ENCODE measurements at regions of chr10 and their contacts with region 1.

Region 1: DNA sequence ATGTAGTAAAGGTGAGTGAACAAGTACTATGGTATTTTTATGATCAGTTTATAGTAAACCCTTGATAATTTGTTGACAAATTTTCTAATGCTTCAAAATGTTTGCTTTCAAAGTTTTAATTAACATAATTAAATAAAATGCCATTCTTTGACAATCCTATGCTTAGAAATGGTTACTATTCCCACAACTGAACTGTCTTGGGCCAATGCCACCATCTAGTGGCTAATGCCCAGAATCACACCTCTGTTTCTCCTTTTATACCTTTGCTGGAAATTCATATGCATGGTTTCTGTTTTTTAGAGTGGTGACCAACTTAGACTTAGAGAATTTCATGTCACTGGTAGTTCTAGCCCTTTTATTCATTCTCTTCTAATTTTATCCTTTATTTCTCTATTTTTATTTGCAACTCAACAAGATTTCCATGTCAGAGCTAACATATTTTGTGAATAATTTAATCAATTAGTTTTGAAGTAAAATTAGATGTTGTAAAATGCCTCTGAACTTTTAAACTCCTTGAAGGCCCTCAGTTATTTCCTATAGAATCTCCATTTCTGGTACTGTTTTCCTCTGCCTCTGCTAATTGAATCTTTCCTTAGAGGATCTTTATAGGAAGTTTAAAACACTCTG is 31.1 kb downstream of the PCGF5 start:
- DNase-seq: peak; percentile 18
- H3K4me3 ChIP-seq: no peak overlapping the region
- H3K27ac ChIP-seq: no peak overlapping the region
- H3K4me1 ChIP-seq: peaks cover 24% of the 10 kb centered on the region
- H3K27me3 ChIP-seq: no peaks in the 10 kb centered on the region
- CTCF ChIP-seq: peak; percentile 95

Region 2: DNA sequence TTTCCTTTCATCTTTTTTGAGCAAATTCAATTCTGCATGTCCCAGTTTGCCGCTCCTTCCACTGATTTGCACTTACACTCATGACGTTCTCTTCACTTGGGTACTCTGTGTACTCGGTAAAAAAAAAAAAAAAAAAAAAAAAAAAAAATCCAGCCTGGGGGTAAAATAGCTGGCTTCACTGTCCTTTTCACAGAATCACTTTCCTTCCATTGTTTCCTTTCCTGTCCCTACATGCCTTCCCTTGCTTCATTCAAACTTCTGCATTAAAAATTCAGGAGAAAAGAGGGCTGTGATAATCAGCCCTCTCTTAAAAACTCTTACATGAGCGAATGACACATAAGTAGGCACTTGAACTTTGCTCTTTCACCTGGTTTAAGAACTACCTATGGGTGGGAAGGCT is 339.4 kb before region 1 on chr10:
- intact Hi-C with region 1: loop called (anchors 2 kb)
- DNase-seq: no peak
- H3K4me3 ChIP-seq: no peak overlapping the region
- H3K27ac ChIP-seq: peak overlapping the region; percentile 60
- H3K4me1 ChIP-seq: peaks cover 8% of the 10 kb centered on the region
- H3K27me3 ChIP-seq: no peaks in the 10 kb centered on the region
- CTCF ChIP-seq: no peak